Prostate gland (tissue), 2 donors: ENCODE measurements at regions of chr4 and their contacts with region 1.

Region 1: DNA sequence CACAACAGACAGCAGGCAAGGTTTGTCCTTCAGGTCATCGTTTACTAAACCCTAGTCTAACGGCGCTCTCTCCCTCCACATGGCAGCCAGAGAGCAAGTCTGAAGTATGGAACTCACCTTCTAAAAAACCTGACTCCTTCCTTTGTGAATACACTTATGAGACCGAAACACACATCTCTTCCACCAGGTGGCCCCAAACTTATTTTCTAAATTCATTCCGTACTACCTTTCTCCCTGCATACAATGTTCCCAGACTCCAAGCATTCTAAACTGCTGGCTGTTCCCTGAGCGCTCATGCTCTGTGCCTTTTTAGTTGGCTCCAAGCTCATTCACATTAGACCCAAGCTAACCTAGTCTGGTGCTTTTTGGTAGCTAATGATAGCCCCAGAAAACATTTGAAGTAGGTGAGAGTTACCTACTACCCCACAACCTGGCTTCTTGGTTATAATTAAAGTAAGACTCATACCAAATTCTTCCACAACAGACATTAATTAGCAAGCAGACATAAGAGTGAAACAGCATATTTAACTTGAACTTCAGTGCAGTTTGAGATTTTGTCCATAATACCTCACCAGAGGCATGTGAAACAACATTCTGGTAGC is 67.6 kb upstream of the DCLK2 start:
- DNase-seq: peak; percentile 35
- H3K4me3 ChIP-seq: no peak overlapping the region
- H3K27ac ChIP-seq: no peak overlapping the region
- H3K4me1 ChIP-seq: no peaks in the 10 kb centered on the region
- H3K27me3 ChIP-seq: no peaks in the 10 kb centered on the region
- CTCF ChIP-seq: peak in 3 of 4 experiments; percentile 52 to 64 (median 55)
- POLR2A ChIP-seq: no peak

Region 2: DNA sequence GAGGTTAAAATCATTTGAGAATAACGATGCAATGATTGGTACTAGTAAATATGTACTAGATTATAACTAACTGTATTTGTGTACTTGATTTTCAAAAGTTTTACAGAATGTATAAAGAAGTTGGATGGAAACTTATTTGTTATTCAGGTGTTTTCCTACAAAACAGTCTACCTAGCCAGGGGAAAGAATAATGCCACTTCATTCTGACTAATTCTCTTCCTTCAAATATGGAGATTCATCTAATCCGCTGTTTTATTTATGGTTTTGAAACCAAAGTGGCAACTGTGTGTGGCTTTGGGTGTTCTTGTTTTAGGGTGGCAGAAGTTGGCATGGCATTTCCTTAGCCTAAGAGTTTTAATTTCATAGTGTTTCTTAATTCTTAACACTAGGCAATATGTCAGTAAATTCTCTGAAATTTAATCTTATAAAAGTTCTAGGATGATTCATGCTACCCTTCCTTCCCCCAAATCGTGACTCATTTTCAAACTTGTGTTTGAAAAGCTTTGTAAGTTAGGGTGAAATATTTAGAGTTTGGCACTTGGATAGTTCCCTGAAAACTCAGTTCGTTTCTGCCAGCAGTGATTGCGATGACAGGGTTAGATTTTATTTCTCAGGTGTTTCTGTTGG is 130.3 kb after region 1 on chr4:
- intact Hi-C with region 1: no loop called
- DNase-seq: no peak
- H3K4me3 ChIP-seq: no peak overlapping the region
- H3K27ac ChIP-seq: no peak overlapping the region
- H3K4me1 ChIP-seq: no peaks in the 10 kb centered on the region
- H3K27me3 ChIP-seq: no peaks in the 10 kb centered on the region
- CTCF ChIP-seq: no peak
- POLR2A ChIP-seq: no peak

Region 3: DNA sequence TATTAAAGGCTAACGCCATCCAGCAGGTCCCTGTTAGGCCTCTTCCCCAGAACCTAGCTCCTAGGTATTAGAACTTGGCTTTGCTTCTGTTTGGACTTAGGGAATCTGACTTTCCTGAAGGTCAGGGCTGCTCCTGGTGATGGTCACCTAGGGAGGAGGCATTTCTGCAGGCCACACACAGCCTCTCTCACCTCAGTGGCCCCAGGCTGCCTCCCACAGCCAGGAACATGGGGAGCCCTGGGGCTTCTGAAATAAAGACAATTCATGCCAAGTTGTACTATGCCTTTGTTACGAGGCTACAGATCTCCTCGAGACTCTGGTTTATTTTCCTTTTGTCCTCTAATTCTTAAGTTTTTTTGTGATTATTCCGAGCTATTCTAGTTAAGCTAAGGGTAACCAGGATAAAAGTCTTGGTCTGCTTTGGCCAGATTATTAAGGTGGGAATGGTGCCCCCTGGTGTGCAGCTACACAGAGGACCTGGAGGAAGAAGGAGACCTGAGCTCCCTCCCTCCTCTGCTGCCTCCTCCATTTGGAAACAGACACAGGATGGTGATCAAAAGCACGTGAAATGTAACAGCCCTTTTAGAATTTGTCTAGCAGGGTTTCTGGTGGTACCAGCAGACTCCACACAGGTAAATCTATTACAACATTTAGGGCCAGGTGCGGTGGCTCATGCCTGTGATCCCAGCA is 198.7 kb after region 1 on chr4:
- intact Hi-C with region 1: loop called (anchors 2 kb)
- DNase-seq: peak; percentile 40
- H3K4me3 ChIP-seq: no peak overlapping the region
- H3K27ac ChIP-seq: no peak overlapping the region
- H3K4me1 ChIP-seq: no peaks in the 10 kb centered on the region
- H3K27me3 ChIP-seq: no peaks in the 10 kb centered on the region
- CTCF ChIP-seq: peak in 3 of 4 experiments; percentile 18 to 54 (median 38)
- POLR2A ChIP-seq: no peak

Region 4: GRCh38 chr4:150242820-150243458 is 232.3 kb after region 1 on chr4:
- intact Hi-C with region 1: loop called (anchors 5 kb)
- DNase-seq: no peak
- H3K4me3 ChIP-seq: no peak overlapping the region
- H3K27ac ChIP-seq: no peak overlapping the region
- H3K4me1 ChIP-seq: no peaks in the 10 kb centered on the region
- H3K27me3 ChIP-seq: no peaks in the 10 kb centered on the region
- CTCF ChIP-seq: peak; percentile 45 to 70 (median 64)
- POLR2A ChIP-seq: no peak